Gastrocnemius medialis (tissue), 4 donors: ENCODE measurements at regions of chr14 and their contacts with region 1.

Region 1: DNA sequence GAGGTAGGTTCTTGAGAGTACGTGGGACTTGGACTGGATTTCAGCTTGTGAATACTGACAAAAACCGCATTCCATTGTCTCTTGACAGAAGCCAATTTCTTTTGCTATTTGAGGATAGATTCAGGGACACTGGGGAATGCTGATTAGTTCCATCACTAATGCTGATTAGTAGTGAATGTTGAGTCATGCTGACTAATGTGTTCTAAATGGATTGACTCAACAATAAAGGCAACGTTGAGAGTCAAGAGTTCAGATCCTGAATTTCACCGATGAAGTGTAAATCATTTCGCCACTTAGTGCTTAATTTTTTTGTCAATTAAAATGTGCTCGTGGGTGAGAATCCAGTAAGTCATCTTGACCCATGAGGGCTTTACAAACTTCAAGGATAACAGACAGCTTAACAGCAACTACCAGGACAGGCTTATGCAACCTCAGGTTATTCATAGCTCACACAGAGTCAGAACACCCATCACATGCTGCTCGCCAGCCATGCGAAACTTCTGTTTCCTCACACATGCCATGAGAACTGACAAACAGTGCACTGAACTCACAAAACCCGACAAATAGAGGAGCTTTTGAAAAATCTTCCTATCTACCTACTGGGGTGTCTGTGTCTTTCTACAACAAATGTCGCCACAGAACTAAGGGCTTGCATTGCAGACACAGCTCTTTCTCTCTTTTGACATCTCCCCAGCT is 316.5 kb downstream of the ZFP36L1 start:
- DNase-seq: peak; percentile 84 to 89
- ATAC-seq: peak; percentile 95 to 98
- H3K4me3 ChIP-seq: no peak overlapping the region
- H3K27ac ChIP-seq: peak overlapping the region; percentile 84 to 95 (median 86)
- H3K4me1 ChIP-seq: peaks cover 30 to 45% of the 10 kb centered on the region in 2 donors
- H3K27me3 ChIP-seq: no peaks in the 10 kb centered on the region
- CTCF ChIP-seq: no peak
- POLR2A ChIP-seq: peak; percentile 29

Region 2: GRCh38 chr14:68392393-68393141 is 83.8 kb before region 1 on chr14:
- in situ Hi-C with region 1: no loop called
- intact Hi-C with region 1: loop called (anchors 5 kb)
- DNase-seq: peak; percentile 47 to 55
- ATAC-seq: peak; percentile 24 to 55
- H3K4me3 ChIP-seq: no peak overlapping the region
- H3K27ac ChIP-seq: peak overlapping the region; percentile 32 to 60 (median 44)
- H3K4me1 ChIP-seq: peaks cover 22 to 24% of the 10 kb centered on the region in 2 donors
- H3K27me3 ChIP-seq: no peaks in the 10 kb centered on the region
- CTCF ChIP-seq: no peak
- POLR2A ChIP-seq: no peak

Region 3: GRCh38 chr14:68627880-68628607 is 151.7 kb after region 1 on chr14:
- in situ Hi-C with region 1: no loop called
- intact Hi-C with region 1: loop called (anchors 10 kb)
- DNase-seq: no peak
- ATAC-seq: no peak
- H3K4me3 ChIP-seq: no peak overlapping the region
- H3K27ac ChIP-seq: no peak overlapping the region
- H3K4me1 ChIP-seq: peaks cover under 1 to 20% of the 10 kb centered on the region in 2 donors
- H3K27me3 ChIP-seq: no peaks in the 10 kb centered on the region
- CTCF ChIP-seq: no peak
- POLR2A ChIP-seq: no peak